ENCODE measurements at regions of chr12 and their contacts with region 1.

Region 1: GRCh38 chr12:120265473-120266179 is at the start of gene PXN:
- DNase-seq: peak; percentile 97
- H3K4me3 ChIP-seq: peak within 1 kb of the TSS; percentile 61 to 93 (median 74)
- H3K27ac ChIP-seq: peak within 1 kb of the TSS; percentile 72 to 97 (median 94)
- H3K4me1 ChIP-seq: peaks cover 21 to 80% (median 62%) of the 10 kb centered on the region in 6 donors
- H3K27me3 ChIP-seq: peaks cover 0 to 40% (median 0%) of the 10 kb centered on the region in 7 donors
- CTCF ChIP-seq: peak; percentile 76 to 97 (median 94)
- POLR2A ChIP-seq: no peak
- total RNA-seq, gene PXN: 91.8 to 161 (median 149) TPM

Region 2: GRCh38 chr12:120167529-120168095 is 98.0 kb before region 1 on chr12:
- intact Hi-C with region 1: no loop called
- DNase-seq: no peak
- H3K4me3 ChIP-seq: no peak overlapping the region
- H3K27ac ChIP-seq: no peak overlapping the region
- H3K4me1 ChIP-seq: no peaks in the 10 kb centered on the region
- H3K27me3 ChIP-seq: no peaks in the 10 kb centered on the region
- CTCF ChIP-seq: no peak
- POLR2A ChIP-seq: no peak

Region 3: GRCh38 chr12:120216742-120217605 is 48.7 kb before region 1 on chr12:
- intact Hi-C with region 1: loop called (anchors 10 kb)
- DNase-seq: no peak
- H3K4me3 ChIP-seq: no peak overlapping the region
- H3K27ac ChIP-seq: peak overlapping the region in 2 of 8 donors; percentile 60 to 62
- H3K4me1 ChIP-seq: peaks cover 0 to 32% (median 19%) of the 10 kb centered on the region in 6 donors
- H3K27me3 ChIP-seq: no peaks in the 10 kb centered on the region
- CTCF ChIP-seq: no peak
- POLR2A ChIP-seq: no peak

Region 4: GRCh38 chr12:120231316-120232011 is 34.2 kb before region 1 on chr12:
- intact Hi-C with region 1: loop called (anchors 2 kb)
- DNase-seq: peak; percentile 88
- H3K4me3 ChIP-seq: peak overlapping the region in 2 of 8 donors; percentile 10 to 55
- H3K27ac ChIP-seq: peak overlapping the region; percentile 43 to 92 (median 87)
- H3K4me1 ChIP-seq: peaks cover 84 to 100% (median 99%) of the 10 kb centered on the region in 6 donors
- H3K27me3 ChIP-seq: peaks cover 0 to 56% (median 0%) of the 10 kb centered on the region in 7 donors
- CTCF ChIP-seq: peak in 7 of 11 experiments; percentile 11 to 66 (median 36)
- POLR2A ChIP-seq: no peak

Measured in spleen (tissue), 13 donors.